ENCODE measurements at regions of chr10 and their contacts with region 1.

Region 1: GRCh38 chr10:12902135-12902572 is 99.4 kb downstream of the CCDC3 start:
- DNase-seq: peak; percentile 63 to 80 (median 70)
- H3K4me3 ChIP-seq: no peak overlapping the region
- H3K27ac ChIP-seq: no peak overlapping the region
- H3K4me1 ChIP-seq: no peaks in the 10 kb centered on the region
- H3K27me3 ChIP-seq: no peaks in the 10 kb centered on the region

Region 2: DNA sequence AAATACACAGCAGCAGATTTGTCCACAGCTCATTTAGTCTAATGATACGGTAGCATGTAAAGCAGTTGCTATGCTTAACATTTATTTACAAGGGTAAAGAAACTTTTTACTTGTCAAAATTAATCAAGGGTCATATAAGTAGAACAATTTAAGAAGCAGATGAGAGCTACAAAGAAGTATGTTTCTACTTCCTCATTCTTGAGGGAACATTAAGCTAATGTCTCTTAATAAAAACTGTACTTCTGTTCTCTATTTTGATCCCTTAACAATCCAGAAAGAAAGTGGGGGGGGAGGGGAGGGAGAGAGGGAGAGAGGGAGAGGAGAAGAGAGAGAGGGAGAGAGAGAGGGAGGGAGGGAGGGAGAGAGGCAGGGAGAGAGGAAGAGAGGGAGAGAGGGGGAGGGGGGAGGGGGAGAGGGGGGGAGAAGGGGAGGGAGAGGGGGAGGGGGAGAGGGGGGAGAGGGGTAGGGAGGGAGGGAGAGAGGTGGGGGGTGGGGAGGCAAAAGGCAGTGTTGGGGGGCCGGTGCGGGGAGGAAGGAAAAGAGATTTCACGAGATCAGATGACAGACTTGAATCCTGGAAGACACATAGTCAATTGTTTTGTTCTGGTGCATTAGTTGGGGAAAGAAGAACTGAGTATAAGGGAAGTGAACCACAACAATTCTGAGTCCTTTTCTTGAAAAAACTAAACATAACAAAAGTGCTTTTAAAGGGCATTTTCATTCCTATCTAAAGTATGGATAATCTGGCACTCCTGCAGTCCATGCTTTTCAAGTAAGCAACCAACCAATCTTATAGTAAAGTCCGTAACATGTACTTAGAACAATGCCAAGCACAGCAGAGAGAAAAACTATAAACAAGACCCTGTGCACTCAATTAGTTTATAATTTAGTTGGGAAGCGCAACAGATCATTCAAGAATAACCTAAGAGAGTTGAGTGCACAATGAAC is 1418.7 kb before region 1 on chr10:
- CTCF ChIA-PET with region 1: no interaction called
- POLR2A ChIA-PET with region 1: no interaction called
- DNase-seq: peak in 2 of 3 donors; percentile 48 to 53
- H3K4me3 ChIP-seq: no peak overlapping the region
- H3K27ac ChIP-seq: no peak overlapping the region
- H3K4me1 ChIP-seq: peaks cover 4 to 11% (median 7%) of the 10 kb centered on the region in 4 experiments
- H3K27me3 ChIP-seq: no peaks in the 10 kb centered on the region

Region 3: DNA sequence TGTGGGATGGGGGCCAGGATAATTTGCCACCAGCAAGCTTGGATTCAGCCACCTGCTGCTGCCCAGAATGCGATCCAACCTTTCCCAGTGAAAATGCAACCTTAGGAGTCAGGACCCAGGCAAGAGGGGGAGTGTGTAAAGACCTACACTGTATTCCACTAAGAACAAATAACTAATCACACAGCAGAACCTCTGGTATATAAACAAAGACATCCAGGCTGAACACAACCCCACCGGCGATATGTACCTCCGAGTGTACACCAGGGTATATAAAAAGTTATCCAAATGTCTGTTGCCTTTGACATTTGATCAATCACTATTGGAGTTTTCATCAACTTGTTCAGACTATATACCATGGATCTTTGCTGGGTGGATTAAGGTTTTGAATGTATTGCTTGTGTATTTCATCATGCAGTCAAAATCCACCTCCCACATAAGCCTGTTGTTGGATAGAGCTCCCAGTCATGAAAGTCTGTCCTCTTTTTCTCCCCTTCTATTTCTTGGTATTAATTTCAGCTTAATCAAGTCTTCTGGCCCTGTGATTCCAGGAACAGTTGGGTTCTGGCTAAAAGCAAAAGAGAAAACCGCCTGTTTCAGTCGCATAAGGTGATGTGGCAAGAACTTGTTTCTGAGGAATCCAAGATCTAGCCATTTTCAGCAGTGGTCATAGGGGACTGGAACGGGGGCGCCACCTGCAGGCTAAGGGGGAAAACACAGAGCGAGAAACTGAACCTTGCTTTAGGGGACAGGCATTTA is 191.4 kb before region 1 on chr10:
- CTCF ChIA-PET with region 1: interaction called, 11 read pairs
- POLR2A ChIA-PET with region 1: no interaction called
- DNase-seq: peak; percentile 65 to 85 (median 79)
- H3K4me3 ChIP-seq: no peak overlapping the region
- H3K27ac ChIP-seq: no peak overlapping the region
- H3K4me1 ChIP-seq: peaks cover 3 to 22% (median 11%) of the 10 kb centered on the region in 4 experiments
- H3K27me3 ChIP-seq: no peaks in the 10 kb centered on the region

Measured in common myeloid progenitor, CD34-positive (primary cell).